Ascending aorta (tissue), 2 donors: ENCODE measurements at regions of chr12 and their contacts with region 1.

Region 1: DNA sequence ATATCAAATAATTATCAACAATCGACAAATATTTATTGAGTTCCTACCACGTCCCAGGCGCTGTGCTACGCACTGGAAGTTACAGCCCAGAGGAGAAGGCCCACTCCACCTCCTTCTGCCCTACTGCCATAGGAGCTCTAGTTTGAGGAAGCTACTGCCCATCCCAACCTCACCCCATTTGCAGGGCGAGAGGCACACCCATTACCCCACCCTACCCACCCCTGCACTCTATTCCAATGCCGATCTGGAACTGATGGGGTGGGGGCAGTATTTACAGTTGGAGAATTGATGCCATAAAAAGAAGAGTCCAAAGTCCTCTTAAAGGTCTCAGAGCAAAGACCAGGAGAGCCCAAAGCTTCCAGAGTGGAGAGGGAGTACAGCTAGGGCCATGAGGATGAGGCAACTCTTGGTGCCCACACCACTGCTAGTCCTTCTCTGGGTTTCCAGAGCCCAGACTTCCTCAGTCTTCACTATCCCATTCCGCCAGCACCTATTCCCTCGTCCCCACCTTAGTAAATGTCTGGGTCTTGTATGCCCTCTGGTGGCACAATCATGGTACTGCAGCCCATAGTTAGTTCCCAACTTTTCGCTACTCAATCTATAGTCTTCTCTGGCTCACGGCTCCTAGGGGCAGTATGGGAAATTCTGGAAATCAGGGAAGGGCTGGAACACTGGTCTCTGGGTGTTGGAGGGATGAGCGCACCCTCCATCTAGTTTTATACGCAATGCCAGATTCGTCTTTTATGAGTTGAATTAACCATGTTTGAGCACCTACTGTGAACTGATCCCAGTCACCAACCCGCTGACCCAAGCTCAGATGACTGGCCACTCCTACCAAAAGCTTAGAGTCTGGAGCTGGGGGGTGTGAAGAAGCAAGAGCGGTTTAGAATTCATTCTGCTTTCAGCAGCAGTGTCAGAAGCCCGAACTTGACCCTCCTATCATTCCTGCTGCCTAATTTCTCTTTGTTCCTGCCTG is 6.9 kb upstream of the ADCY6 start:
- DNase-seq: peak in 1 of 2 donors; percentile 85
- H3K4me3 ChIP-seq: no peak overlapping the region
- H3K27ac ChIP-seq: no peak overlapping the region
- H3K4me1 ChIP-seq: peaks cover 0 to 2% of the 10 kb centered on the region in 2 donors
- H3K27me3 ChIP-seq: no peaks in the 10 kb centered on the region
- CTCF ChIP-seq: peak; percentile 94 to 95 (median 95)

Region 2: DNA sequence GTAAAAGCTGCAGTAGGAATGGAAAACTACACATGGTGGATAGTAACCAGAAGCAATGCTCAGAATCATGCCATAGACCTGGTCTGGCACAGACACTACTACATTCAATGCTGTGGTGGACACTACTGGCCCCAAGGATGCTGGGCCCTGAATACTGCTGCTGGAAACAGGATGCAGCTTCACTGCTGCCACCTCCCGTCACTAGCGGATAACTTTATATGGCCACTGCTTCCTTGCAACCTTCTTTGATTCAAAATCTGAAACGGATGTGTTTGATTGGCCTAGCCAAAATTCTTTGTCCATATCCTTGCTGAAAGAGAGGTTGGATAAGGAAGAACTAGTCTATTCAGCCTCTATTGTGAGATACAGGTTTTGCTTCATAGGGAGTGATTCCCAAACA is 37.5 kb before region 1 on chr12:
- intact Hi-C with region 1: loop called (anchors 1 kb)
- DNase-seq: no peak
- H3K4me3 ChIP-seq: no peak overlapping the region
- H3K27ac ChIP-seq: no peak overlapping the region
- H3K4me1 ChIP-seq: no peaks in the 10 kb centered on the region
- H3K27me3 ChIP-seq: no peaks in the 10 kb centered on the region
- CTCF ChIP-seq: no peak

Region 3: DNA sequence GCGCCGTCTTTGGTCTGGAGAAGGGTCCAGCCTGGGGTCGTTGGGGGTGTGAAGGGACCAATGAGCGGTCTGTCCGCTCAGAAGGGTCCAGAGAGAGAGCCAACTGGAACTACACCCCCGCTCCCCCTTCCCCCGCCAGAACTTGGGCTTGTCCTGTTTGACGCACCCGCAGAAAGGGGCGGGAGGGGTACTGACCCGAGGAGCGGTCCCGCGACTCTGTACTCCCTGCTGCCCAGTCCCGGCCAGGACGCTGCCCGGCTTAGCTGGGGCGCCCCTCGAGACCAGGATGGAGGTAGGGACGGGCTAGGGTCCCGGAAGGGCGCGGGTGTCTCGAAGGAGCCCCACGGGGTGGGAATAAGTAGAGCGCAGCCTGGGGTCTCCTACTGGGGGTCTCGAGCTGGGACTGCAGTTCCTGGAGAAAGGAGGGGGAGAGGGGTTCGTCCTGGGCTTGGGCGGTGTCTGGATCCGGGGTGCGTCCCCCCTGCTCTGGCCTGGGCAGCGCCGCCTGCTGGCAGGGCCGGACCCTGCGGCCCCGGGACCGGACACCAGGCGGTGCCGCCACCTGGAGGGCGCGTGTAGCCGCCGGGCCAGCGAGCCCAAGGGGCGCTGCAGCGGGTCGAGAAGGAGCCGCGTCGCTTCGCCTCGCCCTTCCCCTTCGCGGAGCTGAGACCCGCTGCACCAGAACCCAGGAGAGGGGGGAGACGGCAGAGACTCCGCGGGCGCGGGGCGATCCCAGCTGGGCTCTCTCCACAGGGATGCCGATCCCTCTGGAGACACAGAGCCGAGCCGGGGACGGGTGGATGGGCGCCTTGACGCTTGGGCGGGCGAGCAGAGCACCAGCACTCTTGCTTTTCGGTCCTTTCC is 18.7 kb after region 1 on chr12:
- intact Hi-C with region 1: loop called (anchors 1 kb)
- DNase-seq: peak; percentile 36 to 92
- H3K4me3 ChIP-seq: peak overlapping the region; percentile 81 to 92
- H3K27ac ChIP-seq: peak overlapping the region; percentile 91 to 92
- H3K4me1 ChIP-seq: peaks cover 11 to 35% of the 10 kb centered on the region in 2 donors
- H3K27me3 ChIP-seq: no peaks in the 10 kb centered on the region
- CTCF ChIP-seq: peak; percentile 98 to 99 (median 99)